Activated T-helper 1 cell treated with anti-CD3 and anti-CD28 coated beads, Interleukin-12 subunit alpha, Interleukin-12 subunit beta, Interleukin-2, Interleukin-4 antibody, amounts not matched to agents 30 ng/mL and 10 ng/mL and 1 ng/mL, durations not matched to agents 14 hours and 24 hours and 36 hours (primary cell): ENCODE measurements at regions of chr14 and their contacts with region 1.

Region 1: GRCh38 chr14:50038398-50039119 is 77.8 kb downstream of the VCPKMT start:
- DNase-seq: peak; percentile 71
- H3K4me3 Mint-ChIP-seq: peak overlapping the region; percentile 78
- H3K27ac Mint-ChIP-seq: peak overlapping the region; percentile 98
- H3K4me1 Mint-ChIP-seq: peaks cover 79% of the 10 kb centered on the region
- H3K27me3 Mint-ChIP-seq: no peaks in the 10 kb centered on the region

Region 2: DNA sequence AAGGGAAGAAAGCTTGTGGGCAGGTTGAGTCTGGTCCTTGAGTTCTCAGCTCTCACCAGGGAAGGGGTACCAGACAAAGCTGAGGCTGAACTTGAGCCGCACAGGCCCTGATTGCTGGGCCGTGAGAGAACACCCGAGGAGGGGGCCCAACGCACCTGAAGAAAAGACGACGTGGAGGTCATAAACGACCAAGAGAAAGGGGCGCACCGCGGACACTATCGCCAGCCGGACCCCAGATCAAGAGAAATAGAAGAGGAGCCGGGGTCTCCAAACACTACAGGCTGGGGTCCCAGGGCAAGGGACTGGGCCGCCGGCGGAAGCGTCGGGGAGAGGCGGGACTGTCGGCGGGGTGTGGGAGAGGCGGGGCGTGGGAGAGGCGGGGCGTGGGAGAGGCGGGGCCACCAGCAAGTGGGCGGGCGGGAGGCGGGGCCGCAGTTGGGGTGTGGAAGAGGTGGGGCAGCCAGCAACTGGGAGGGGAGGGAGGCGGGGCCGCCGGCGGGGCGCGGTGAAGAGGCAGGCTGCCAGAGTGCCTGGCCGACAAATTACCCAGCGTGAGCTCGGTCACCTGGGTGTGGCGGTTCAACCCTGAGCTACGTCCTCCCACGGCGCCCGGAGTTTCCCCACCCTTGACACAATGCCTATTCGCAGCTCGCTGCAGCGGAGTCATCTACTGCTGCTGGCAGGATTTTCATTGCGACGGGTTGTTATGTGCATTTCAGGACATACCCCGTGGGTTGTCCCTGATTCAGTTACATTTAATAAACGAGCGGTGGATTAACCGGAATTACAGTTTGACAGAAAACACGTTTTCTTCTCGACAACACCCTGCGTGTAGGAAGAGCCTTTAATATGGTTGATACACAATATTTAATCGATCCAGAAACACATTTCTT is 170.5 kb before region 1 on chr14:
- intact Hi-C with region 1: loop called (anchors 1 kb)
- DNase-seq: peak; percentile 92
- H3K4me3 Mint-ChIP-seq: peak overlapping the region; percentile 93
- H3K27ac Mint-ChIP-seq: peak overlapping the region; percentile 97
- H3K4me1 Mint-ChIP-seq: peaks cover 20% of the 10 kb centered on the region
- H3K27me3 Mint-ChIP-seq: no peaks in the 10 kb centered on the region

Region 3: GRCh38 chr14:49920935-49921334 is 117.6 kb before region 1 on chr14:
- intact Hi-C with region 1: no loop called
- DNase-seq: no peak
- H3K4me3 Mint-ChIP-seq: no peak overlapping the region
- H3K27ac Mint-ChIP-seq: no peak overlapping the region
- H3K4me1 Mint-ChIP-seq: peaks cover 29% of the 10 kb centered on the region
- H3K27me3 Mint-ChIP-seq: no peaks in the 10 kb centered on the region

Region 4: DNA sequence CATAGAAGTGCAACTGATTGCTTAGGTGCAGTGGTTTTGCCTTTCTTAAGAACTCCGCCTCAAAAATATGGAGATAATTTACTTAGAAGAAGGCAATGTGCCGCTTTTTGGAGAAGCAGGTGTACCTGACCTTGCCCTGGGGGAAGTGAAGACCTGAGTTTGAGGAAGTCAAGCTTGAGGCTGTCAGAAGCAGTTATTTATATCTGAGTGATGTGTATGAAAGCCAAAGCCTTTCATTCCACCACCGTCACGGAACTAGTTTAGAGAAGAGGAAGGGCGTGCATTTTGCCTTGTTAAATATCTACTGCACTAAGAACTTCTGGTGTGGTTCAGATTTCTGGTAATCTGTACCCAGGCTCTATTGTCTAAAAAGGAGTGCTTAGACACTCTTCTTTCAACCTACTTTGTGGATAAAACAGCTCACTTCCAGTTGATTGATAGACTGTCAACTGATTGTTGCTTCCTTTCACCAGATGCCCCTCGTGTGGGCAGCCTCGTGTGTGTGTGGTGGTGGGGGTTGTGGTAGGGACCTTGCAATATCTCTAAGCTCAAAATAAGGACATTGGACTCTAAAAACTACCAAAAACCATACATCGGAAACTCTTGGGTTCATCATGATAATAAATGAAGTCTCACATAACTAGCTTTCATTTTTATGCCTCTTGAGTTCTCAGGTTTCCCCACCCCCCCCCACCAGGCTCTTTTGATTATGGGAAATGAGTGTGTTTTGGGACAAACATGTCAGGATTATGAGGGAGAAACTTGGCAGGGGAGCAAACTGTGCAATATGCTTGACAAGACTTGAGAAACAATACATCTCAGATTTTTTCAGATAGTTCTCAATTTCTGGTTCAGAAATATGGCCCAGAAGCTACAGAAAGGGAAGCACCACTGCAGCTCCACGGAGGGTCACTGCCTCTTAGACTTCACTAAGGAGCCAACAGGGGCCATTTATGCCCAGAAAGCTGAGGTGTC is 67.1 kb before region 1 on chr14:
- intact Hi-C with region 1: loop called (anchors 1 kb)
- DNase-seq: peak; percentile 48
- H3K4me3 Mint-ChIP-seq: peak overlapping the region; percentile 83
- H3K27ac Mint-ChIP-seq: peak overlapping the region; percentile 99
- H3K4me1 Mint-ChIP-seq: peaks cover 61% of the 10 kb centered on the region
- H3K27me3 Mint-ChIP-seq: no peaks in the 10 kb centered on the region

Region 5: GRCh38 chr14:50008562-50009350 is 29.8 kb before region 1 on chr14:
- intact Hi-C with region 1: no loop called
- DNase-seq: no peak
- H3K4me3 Mint-ChIP-seq: no peak overlapping the region
- H3K27ac Mint-ChIP-seq: no peak overlapping the region
- H3K4me1 Mint-ChIP-seq: peaks cover 41% of the 10 kb centered on the region
- H3K27me3 Mint-ChIP-seq: peaks cover 2% of the 10 kb centered on the region

Region 6: GRCh38 chr14:50021261-50022031 is 17.1 kb before region 1 on chr14:
- intact Hi-C with region 1: loop called (anchors 1 kb)
- DNase-seq: no peak
- H3K4me3 Mint-ChIP-seq: peak overlapping the region; percentile 31
- H3K27ac Mint-ChIP-seq: peak overlapping the region; percentile 71
- H3K4me1 Mint-ChIP-seq: peaks cover 38% of the 10 kb centered on the region
- H3K27me3 Mint-ChIP-seq: no peaks in the 10 kb centered on the region

Region 7: DNA sequence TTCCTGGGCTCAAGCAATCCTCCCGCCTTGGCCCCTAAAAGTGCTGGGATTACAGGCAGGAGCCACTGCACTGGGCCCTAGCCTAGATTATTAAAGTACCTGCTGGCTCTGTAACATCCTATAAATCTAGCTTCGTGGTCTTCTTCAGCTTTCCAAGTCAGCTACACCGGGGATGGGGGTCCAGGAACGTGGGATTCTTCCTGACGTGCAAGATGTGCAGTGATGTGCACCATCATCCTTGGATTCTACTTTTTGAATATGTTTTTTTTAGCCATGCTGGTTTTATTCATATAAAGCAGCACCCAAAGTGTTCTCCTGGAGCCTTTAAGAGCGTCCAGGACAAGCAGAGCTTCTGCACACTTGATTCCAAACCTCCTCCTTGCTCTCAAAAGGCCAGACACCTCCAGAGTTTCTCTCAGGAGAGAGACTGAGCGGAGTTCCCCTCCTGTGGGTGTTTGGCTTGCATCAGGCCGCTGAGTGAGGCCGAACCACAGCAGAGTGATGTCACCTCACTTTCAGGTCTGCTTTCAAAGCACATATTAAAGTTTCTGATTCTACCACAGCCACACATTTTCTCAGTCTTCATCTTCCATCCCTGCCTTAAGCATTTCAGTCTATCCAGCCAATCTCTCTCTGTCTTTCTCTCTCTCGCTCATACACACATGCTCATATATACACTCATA is 44.4 kb after region 1 on chr14:
- intact Hi-C with region 1: loop called (anchors 1 kb)
- DNase-seq: peak; percentile 84
- H3K4me3 Mint-ChIP-seq: peak overlapping the region; percentile 16
- H3K27ac Mint-ChIP-seq: peak overlapping the region; percentile 90
- H3K4me1 Mint-ChIP-seq: peaks cover 70% of the 10 kb centered on the region
- H3K27me3 Mint-ChIP-seq: no peaks in the 10 kb centered on the region

Region 8: DNA sequence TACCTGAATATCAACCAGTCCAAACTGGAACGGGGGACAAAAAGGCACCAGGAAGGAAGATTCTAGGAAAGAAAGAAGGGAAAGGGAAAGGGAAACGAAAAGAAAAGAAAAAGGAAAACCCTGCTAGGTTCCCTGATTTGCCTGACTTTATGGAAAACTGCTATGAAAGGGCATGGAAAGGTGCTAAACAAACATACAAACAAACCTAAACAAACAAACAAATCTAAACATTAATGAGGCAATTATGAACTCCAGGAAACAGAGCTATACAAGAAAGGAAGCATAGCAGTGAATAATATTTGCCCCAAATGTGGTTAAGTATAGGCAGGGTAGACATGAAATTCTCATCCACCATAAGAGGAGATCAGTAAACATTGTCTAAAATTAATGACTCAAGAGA is 89.7 kb after region 1 on chr14:
- intact Hi-C with region 1: no loop called
- DNase-seq: no peak
- H3K4me3 Mint-ChIP-seq: no peak overlapping the region
- H3K27ac Mint-ChIP-seq: no peak overlapping the region
- H3K4me1 Mint-ChIP-seq: peaks cover 5% of the 10 kb centered on the region
- H3K27me3 Mint-ChIP-seq: no peaks in the 10 kb centered on the region

Region 9: DNA sequence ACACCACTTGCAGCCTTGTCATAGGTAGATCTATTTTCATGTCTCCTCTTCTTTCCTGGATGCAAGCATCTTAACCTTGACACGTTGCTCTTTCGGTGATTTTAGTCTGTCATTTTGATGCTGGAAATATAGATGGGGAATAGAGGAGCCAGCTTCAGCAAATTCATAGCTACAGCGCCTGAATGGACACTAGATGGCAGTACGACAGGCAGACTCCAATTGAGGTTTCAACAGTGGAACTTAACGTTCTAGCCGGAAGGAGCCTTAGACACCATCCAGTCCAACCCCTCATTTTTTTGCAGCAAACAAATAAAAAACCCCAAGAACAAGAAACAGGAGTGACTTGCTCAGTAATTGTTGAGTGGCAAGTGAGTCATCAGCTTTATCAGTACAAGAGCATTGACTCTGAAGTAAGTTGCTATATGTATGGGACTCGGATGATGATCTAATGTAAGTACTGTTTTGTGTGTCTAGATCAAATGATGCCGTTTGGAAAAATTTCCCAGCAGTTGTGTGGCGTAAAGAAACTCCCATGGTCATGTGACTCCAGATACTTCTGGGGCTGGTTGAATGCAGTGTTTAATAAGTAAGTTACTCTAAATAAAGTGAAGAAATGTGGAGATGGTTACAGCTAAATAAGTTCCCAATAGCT is 282.6 kb after region 1 on chr14:
- intact Hi-C with region 1: loop called (anchors 1 kb)
- DNase-seq: peak; percentile 68
- H3K4me3 Mint-ChIP-seq: no peak overlapping the region
- H3K27ac Mint-ChIP-seq: no peak overlapping the region
- H3K4me1 Mint-ChIP-seq: peaks cover 20% of the 10 kb centered on the region
- H3K27me3 Mint-ChIP-seq: no peaks in the 10 kb centered on the region